PC-3 (cell line): ENCODE measurements at regions of chr13 and their contacts with region 1.

Region 1: DNA sequence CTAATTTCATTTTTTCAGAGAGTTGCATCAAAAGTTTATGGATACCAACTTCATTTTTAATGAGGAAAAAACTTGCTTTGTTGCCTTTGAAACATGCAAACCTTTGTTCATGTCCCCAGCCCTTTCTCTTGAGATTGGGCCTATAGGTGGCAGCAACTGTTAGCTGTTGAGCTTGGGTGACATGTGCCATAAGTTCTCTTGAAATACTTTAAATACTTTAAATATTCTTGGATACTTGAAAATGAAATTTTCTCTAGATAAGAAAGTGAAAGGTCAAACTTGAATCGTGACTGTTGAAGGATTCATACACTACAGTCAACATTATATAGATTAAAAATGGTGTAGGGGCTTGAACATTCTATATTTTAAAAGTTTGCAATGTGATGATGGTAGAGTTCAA is 294.9 kb downstream of the NDFIP2 start:
- DNase-seq: peak; percentile 73
- ATAC-seq: peak; percentile 88
- H3K4me3 ChIP-seq: no peak overlapping the region
- H3K27ac ChIP-seq: peak overlapping the region; percentile 43
- H3K4me1 ChIP-seq: peaks cover 21% of the 10 kb centered on the region
- H3K27me3 ChIP-seq: no peaks in the 10 kb centered on the region
- CTCF ChIP-seq: peak; percentile 84

Region 2: DNA sequence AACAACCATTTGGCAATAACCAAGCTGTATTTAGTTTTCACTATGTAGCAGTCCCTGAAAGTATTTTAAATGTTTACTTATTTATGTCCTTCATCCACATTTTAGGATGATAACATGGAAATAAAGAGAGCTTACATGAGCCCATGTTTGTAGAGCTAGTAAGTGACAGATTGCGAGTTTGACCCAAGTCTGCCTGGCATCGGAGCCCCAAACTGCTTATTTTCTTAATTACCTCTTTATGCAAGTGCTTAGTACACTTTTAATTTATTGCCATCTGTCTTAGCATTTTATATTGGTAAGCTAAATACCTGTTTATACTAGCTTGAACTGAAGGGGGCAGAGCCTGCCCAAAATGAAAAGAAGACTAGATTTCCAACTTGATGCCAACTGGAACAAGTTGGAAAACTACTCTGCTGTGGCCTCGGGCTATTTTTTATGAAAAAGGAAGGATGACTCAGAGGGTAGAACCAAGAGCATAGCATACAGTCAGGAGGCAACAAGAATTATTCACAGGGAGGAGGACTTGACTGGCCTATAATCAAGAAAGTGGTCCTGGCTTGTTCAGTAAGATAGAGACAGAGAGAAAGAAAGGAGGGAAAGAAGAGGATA is 144.7 kb before region 1 on chr13:
- CTCF ChIA-PET with region 1: no interaction called
- POLR2A ChIA-PET with region 1: no interaction called
- intact Hi-C with region 1: loop called (anchors 5 kb)
- DNase-seq: peak; percentile 95
- ATAC-seq: peak; percentile 99
- H3K4me3 ChIP-seq: no peak overlapping the region
- H3K27ac ChIP-seq: no peak overlapping the region
- H3K4me1 ChIP-seq: peaks cover 4% of the 10 kb centered on the region; the same call in 1 of the 2 replicates
- H3K27me3 ChIP-seq: no peaks in the 10 kb centered on the region
- CTCF ChIP-seq: peak; percentile 70

Region 3: DNA sequence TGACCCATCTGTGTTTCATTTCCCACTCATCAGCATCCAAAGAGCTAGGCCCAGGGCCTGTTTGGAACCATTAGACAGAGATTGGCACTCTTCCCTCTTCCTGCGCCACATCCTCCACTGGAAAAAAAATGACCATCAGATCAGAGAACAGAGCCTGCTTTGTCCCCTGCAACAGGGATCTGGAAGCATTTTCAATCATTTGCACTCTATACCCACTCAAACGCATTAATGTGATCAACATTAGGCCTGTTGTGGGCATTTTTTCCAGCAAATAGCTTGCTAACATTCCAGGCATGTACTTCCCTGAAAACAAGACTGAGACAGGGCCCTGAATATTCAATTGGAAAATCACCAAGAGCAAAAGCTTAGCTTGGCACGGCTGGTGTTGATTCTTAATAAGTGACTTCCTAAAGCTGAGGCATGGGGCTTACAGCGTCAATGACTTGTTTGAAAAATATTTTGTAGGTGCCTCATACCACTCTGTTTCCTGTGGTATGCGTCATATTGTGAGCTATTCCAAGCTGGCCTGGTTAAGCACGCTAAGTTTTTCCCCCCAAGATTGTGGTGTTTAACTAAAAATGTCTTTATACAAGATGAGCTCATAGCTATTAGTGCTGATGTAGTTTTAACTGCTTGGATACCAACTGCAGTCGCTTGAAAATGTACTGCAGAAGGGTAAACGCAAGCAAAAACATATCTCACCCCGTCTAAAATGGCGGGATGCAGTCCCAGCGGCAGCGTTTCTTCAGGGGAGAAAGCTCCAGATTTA is 160.7 kb after region 1 on chr13:
- CTCF ChIA-PET with region 1: interaction called, 5 read pairs
- POLR2A ChIA-PET with region 1: interaction called, 5 read pairs
- intact Hi-C with region 1: loop called (anchors 5 kb)
- DNase-seq: peak; percentile 95
- ATAC-seq: peak; percentile 95
- H3K4me3 ChIP-seq: no peak overlapping the region
- H3K27ac ChIP-seq: peak overlapping the region; percentile 97
- H3K4me1 ChIP-seq: peaks cover 44% of the 10 kb centered on the region
- H3K27me3 ChIP-seq: no peaks in the 10 kb centered on the region
- CTCF ChIP-seq: no peak

Region 4: DNA sequence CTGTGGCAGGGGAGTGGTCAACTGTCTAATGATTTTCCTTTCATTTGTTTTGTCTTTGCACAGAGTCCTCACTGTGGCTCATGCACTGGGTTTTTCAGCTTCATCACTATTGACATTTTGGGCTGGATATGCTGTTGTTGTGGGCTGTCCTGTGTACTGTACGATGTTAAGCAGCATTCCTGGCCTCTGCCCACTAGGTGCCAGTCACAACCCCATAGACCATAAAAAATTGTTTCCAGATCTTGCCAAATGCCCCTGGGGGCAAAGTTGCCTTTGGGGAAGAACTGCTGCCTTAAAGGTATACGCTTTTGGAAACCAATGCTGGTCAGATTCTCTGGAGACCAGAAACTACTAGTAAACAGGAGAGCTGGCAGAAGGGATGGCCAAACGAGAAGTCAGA is 254.7 kb after region 1 on chr13:
- CTCF ChIA-PET with region 1: no interaction called
- POLR2A ChIA-PET with region 1: no interaction called
- intact Hi-C with region 1: loop called (anchors 2 kb)
- DNase-seq: peak; percentile 88
- ATAC-seq: peak; percentile 98
- H3K4me3 ChIP-seq: no peak overlapping the region
- H3K27ac ChIP-seq: peak overlapping the region; percentile 69
- H3K4me1 ChIP-seq: peaks cover 23% of the 10 kb centered on the region
- H3K27me3 ChIP-seq: no peaks in the 10 kb centered on the region
- CTCF ChIP-seq: peak; percentile 64

Region 5: DNA sequence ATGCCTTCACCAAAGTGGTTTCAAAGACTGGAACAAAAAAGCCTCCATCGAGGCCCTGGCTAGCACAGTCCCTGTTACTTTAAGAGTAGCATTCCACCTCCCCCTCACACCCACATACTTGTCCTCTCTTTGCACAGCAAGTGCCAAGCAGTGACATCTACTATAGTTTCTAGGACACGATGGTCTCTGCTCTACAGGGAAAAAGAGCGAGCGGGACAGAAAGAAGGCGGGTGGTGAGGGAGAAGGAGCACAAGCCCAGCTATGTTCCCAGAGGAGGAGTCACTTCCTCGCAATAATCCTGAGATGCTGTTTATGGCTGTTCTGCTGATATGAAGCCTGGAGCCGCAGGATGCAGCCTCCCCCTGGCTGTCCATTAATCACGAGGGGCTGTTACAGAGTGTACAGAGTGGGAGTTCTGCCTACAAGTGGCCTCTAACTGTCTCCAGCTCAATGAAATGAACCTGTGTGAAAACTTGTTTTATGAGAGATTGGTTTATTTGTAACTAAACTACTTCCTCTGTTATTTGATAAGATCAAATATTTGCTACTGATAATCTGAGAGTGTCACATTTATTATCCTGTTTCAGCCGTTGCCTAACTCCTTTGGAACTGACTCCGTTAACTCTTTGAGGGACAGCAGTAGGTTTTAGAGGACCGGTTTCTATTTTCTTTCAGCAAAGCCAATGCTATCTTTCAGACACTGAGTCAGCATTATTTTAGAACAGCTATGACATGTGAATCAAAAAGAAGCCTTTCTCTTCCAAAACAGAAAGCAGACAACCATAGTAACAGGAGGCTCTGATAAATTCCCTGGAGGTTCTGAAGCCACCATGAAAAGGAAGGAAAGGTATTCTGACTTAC is 357.1 kb after region 1 on chr13:
- CTCF ChIA-PET with region 1: no interaction called
- POLR2A ChIA-PET with region 1: no interaction called
- intact Hi-C with region 1: loop called (anchors 5 kb)
- DNase-seq: peak; percentile 45
- ATAC-seq: peak; percentile 84
- H3K4me3 ChIP-seq: peak overlapping the region; percentile 62
- H3K27ac ChIP-seq: peak overlapping the region; percentile 45
- H3K4me1 ChIP-seq: peaks cover 27% of the 10 kb centered on the region
- H3K27me3 ChIP-seq: no peaks in the 10 kb centered on the region
- CTCF ChIP-seq: no peak

Region 6: GRCh38 chr13:81017513-81018152 is 1241.8 kb after region 1 on chr13:
- CTCF ChIA-PET with region 1: no interaction called
- POLR2A ChIA-PET with region 1: no interaction called
- intact Hi-C with region 1: loop called (anchors 10 kb)
- DNase-seq: peak; percentile 61
- ATAC-seq: peak; percentile 55
- H3K4me3 ChIP-seq: no peak overlapping the region
- H3K27ac ChIP-seq: no peak overlapping the region
- H3K4me1 ChIP-seq: no peaks in the 10 kb centered on the region
- H3K27me3 ChIP-seq: no peaks in the 10 kb centered on the region
- CTCF ChIP-seq: peak; percentile 67